ENCODE measurements at regions of chr18 and their contacts with region 1.

Region 1: DNA sequence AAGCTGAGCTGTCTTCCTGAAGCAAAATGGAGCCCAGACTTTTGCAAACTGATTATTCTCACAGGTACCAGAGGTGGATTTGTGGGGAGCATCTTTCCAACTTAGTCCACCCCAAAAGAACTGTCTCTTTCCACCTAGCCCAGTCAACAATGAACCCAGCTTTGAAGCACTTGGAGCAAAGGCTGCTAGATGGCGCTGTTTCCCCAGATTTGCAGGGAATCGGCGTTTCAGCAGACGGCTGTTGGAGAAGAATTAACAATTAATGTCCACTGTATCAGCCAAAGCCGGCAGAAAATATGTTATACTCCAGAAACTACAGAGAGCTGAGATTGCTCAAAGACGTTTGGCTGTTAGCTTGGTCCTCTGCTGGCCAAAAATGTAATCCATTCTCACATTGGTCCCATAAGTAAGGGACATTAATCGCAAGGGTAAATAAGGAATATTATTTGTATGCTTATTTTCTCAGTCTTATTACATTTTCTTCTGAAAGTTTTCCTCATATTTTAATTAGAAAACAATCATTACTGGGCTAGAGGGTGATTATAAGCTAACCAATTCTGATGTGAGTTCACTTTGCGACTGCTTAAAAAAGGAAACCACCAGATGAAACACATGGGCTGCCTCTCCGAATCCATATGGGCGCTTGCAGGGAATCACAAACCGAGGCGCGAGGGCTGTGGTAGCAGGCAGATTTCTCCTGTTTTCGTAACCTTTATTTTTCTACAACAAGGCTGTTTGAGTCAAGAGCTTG is 423.8 kb upstream of the MEX3C start:
- DNase-seq: peak; percentile 52
- CTCF ChIP-seq: peak; percentile 89

Region 2: DNA sequence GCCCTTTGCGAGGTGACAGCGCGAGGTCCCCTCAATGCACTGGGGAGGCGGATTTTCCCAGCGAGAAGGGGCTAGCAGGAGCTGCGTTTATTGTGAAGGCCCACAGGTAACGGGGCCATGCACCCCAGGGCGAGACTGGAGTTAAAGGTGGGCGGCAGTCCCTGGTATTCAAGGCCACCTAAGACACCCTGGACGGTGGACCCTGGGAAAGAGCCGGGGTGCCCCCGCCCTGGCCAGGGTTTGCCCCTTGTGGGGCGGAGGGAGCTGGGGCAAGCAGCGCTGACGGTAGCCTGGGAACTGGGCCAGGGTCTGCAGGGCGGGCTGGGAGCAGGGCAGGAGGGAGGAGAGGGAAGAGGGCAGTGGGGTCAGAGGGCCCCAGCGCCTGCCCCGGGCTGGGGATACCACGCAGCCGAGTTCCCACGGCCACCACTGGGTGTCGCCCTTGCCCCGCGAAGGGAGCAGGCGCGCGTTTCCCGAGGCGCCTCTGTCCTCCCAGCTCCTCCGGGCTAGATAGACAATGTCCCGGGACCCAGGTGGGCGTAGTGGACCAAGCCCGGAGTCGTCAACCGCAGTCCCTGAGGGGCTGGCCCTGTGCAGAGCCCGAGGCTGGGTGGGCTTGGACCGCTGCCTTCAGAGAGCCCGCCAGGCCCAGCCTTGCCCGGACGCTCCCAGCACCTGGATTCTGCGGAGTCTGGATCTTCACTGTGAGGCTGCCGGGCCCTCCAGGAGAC is 511.1 kb before region 1 on chr18:
- CTCF ChIA-PET with region 1: interaction called, 19 read pairs
- POLR2A ChIA-PET with region 1: no interaction called
- DNase-seq: peak; percentile 89
- CTCF ChIP-seq: peak; percentile 94

Region 3: DNA sequence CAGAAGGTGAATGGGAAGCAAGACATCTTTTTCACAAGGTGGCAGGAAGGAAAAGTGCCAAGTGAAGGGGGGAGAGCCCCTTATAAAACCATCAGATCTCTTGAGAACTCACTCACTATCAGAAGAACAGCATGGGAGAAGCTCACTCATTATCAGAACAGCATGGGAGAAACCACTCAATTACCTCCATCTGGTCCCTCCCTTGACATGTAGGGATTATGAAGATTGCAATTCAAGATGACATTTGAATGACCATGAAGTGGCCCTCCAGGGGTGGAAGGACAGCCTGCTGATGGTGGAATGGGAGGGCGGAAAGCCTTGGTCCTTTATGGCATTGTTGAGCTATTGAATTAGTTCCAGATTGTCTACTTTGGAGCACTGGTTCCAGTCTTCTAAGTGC is 10.8 kb before region 1 on chr18:
- CTCF ChIA-PET with region 1: interaction called, 41 read pairs
- POLR2A ChIA-PET with region 1: no interaction called
- DNase-seq: no peak
- CTCF ChIP-seq: no peak

Region 4: DNA sequence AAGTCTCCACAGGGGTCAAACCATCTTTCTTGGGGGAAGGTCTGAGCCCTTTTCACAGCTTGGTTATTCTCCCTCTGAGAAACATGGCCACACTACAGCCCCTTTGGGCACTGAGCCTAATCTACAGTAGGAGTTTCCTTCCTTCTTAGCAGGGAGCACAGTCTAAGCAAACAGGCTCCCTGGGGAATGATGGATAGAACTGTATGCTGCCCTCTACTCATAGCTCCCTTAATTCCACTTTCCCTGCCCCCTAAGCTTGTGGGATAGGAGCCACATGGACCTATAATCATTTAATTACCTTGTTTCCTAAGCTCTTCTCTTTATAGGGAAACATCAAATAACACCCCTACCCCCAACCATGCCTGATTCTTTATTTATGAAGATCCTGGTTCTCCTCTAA is 18.3 kb after region 1 on chr18:
- CTCF ChIA-PET with region 1: interaction called, 17 read pairs
- POLR2A ChIA-PET with region 1: no interaction called
- DNase-seq: no peak
- CTCF ChIP-seq: no peak

Region 5: DNA sequence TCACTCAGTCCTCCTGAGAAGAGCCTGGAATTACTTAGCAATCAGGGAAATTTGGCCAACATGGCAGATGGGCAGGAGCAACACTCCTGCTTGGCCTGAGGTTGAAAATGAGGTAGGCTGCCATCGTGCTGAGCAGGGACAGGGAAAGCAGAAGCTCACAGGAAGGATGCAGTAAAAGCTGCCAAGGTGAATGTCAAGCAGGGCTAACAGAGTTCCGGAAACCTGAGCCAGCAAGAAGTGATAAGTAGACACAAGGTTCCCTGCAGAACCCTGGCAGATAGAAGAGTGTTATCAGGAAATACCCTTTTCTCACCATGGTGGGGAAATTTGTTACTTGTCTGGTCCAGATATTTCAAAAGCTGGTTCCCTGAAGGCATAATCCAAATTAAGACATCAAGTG is 30.5 kb after region 1 on chr18:
- CTCF ChIA-PET with region 1: interaction called, 15 read pairs
- POLR2A ChIA-PET with region 1: no interaction called
- DNase-seq: no peak
- CTCF ChIP-seq: no peak

Region 6: GRCh38 chr18:51668101-51668500 is 46.8 kb after region 1 on chr18:
- CTCF ChIA-PET with region 1: interaction called, 14 read pairs
- POLR2A ChIA-PET with region 1: no interaction called
- DNase-seq: peak; percentile 53
- CTCF ChIP-seq: peak; percentile 76

Region 7: DNA sequence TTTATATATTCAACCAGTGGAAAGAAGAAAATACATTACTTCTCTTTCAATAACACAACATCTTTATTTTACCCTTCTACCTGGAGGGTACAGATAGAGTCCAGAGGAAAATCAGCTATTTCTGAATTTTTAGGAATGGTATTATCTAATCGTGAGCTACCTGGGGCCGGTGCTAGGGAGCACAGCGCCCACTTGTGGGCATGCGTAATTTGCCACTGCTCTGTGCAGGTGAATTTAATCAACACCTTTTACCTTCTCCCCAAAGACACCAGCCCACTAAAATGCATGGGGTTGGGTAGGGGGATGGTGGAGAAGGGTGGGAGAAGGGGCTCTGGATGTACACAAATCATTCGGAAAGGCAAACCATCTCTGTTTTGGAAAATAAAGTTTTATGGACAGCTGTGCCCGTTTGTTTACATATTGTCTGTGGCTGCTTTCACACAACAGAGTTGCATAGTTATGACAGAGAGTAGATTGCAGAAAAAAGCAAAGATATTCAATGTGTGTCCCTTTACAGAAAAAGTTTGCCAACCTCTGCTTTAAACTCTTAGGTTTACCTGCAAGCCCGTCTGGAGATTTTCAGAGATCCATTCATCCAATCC is 667.2 kb after region 1 on chr18:
- CTCF ChIA-PET with region 1: interaction called, 30 read pairs
- POLR2A ChIA-PET with region 1: no interaction called
- DNase-seq: peak; percentile 26
- CTCF ChIP-seq: peak; percentile 87

Region 8: DNA sequence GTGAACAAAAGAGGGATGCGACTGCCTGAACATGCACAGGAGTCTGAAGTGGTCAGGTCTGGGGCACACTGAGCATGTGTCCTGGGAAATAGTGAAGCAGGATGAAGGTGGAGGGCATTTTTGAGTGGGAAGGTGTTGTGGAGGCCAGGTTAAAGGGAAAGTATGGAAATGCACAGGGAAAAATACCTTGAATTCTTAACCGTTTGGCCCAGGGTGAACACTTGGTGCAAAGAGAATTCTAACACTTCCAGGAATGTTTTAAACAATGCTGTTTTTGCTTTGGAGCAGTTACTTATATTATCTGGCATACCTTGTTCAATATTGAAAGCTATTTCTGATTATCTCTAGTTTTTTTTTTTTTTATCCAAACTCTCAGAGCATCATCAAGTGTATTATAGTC is 1342.2 kb after region 1 on chr18:
- CTCF ChIA-PET with region 1: no interaction called
- POLR2A ChIA-PET with region 1: no interaction called
- DNase-seq: no peak
- CTCF ChIP-seq: no peak

Measured in GM10248 (cell line).